GM13977 (cell line): ENCODE measurements at regions of chr7 and their contacts with region 1.

Region 1: GRCh38 chr7:35906191-35906908 is 105.5 kb downstream of the SEPTIN7 start:
- DNase-seq: peak; percentile 42
- CTCF ChIP-seq: peak; percentile 74

Region 2: GRCh38 chr7:35280902-35281301 is 625.4 kb before region 1 on chr7:
- in situ Hi-C with region 1: no loop called
- DNase-seq: no peak
- CTCF ChIP-seq: no peak

Region 3: DNA sequence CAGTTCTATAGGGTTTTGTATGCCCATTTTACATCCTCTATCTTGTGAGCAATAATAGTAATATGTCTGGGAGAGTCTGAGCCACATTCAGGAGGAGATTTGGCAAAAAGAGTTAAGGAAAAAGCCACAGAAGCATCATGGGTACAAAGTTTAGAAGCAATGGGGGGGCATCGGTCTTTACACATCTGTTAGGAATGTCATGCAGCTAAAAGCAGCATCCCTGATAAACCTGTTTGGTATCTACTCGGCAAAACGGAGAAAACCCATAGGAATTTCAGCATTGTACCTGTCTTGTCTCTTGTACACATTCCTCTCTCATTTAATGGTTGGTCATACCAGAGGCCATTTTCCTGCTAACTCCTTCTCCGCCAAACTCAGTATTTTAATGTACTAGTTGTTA is 198.9 kb before region 1 on chr7:
- in situ Hi-C with region 1: loop called (anchors 5 kb)
- DNase-seq: no peak
- CTCF ChIP-seq: no peak